Common myeloid progenitor, CD34-positive (primary cell): ENCODE measurements at regions of chr15 and their contacts with region 1.

Region 1: GRCh38 chr15:40217159-40217824 is 21.6 kb upstream of the PAK6 start:
- DNase-seq: peak; percentile 80 to 93 (median 87)
- H3K4me3 ChIP-seq: no peak overlapping the region
- H3K27ac ChIP-seq: no peak overlapping the region
- H3K4me1 ChIP-seq: no peaks in the 10 kb centered on the region
- H3K27me3 ChIP-seq: no peaks in the 10 kb centered on the region

Region 2: DNA sequence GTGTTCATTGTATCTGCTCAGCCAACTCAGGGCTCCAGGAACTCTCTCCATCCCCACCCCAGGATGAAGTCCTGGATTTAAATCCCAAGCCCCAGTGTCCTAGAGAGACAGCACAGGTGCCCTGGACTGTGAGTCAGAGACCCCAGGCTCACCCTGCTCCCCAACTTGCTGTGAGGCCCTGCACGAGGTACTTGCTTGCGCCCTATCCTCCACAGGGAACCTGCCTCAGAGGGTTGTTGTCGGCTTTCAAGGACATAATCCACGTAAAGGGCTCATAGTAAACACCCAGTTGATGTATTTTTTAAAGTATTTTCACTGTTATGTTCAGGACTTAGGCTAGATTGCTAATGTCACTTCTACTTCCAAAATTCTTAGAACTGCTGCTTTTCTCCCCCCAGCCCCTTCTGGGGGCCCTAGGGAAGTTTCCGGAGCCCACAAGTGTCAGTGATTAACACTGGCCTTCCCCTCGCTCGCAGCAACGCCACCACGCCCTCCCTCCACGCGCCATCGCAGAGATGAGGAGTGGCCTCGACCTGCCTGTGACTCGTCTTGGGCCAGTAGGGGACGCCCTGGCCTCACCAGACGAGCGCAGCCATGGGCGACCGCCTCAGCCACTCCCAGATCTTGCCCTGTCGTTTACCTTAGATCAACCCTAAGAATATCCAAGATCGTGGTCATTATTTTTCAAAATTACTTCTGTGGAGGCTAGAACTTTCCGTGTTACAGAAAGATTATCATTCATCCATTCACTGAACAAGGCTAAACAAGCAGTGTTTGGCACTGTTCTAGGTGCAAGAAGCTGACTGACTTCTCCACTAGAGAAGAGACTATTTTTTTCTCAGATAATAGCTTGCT is 172.3 kb before region 1 on chr15:
- CTCF ChIA-PET with region 1: interaction called, 20 read pairs
- POLR2A ChIA-PET with region 1: no interaction called
- DNase-seq: peak; percentile 84 to 88 (median 84)
- H3K4me3 ChIP-seq: peak overlapping the region in 4 of 7 experiments; percentile 37 to 65 (median 46)
- H3K27ac ChIP-seq: peak overlapping the region in 1 of 2 experiments; percentile 59
- H3K4me1 ChIP-seq: peaks cover 13 to 62% (median 55%) of the 10 kb centered on the region in 4 experiments
- H3K27me3 ChIP-seq: no peaks in the 10 kb centered on the region

Region 3: GRCh38 chr15:40232625-40233070 is 15.4 kb after region 1 on chr15:
- CTCF ChIA-PET with region 1: interaction called, 23 read pairs
- POLR2A ChIA-PET with region 1: no interaction called
- DNase-seq: no peak
- H3K4me3 ChIP-seq: no peak overlapping the region
- H3K27ac ChIP-seq: no peak overlapping the region
- H3K4me1 ChIP-seq: peaks cover 4 to 24% (median 14%) of the 10 kb centered on the region in 4 experiments
- H3K27me3 ChIP-seq: no peaks in the 10 kb centered on the region

Region 4: GRCh38 chr15:40307421-40308211 is 90.3 kb after region 1 on chr15 and contains the start of gene PLCB2:
- CTCF ChIA-PET with region 1: interaction called, 35 read pairs
- POLR2A ChIA-PET with region 1: no interaction called
- DNase-seq: peak; percentile 77 to 87 (median 83)
- H3K4me3 ChIP-seq: peak within 1 kb of the TSS; percentile 53 to 92 (median 82)
- H3K27ac ChIP-seq: peak within 1 kb of the TSS; percentile 56 to 81
- H3K4me1 ChIP-seq: peaks cover 4 to 64% (median 50%) of the 10 kb centered on the region in 4 experiments
- H3K27me3 ChIP-seq: no peaks in the 10 kb centered on the region